ENCODE measurements at regions of chr13 and their contacts with region 1.

Region 1: GRCh38 chr13:73325711-73326558 is 267.1 kb downstream of the KLF5 start:
- DNase-seq: no peak
- ATAC-seq: no peak
- H3K4me3 ChIP-seq: no peak overlapping the region
- H3K4me3 Mint-ChIP-seq: no peak overlapping the region
- H3K27ac ChIP-seq: no peak overlapping the region
- H3K27ac Mint-ChIP-seq: no peak overlapping the region
- H3K4me1 ChIP-seq: no peaks in the 10 kb centered on the region
- H3K4me1 Mint-ChIP-seq: no peaks in the 10 kb centered on the region
- H3K27me3 ChIP-seq: no peaks in the 10 kb centered on the region
- H3K27me3 Mint-ChIP-seq: peaks cover 8% of the 10 kb centered on the region
- CTCF ChIP-seq: no peak

Region 2: DNA sequence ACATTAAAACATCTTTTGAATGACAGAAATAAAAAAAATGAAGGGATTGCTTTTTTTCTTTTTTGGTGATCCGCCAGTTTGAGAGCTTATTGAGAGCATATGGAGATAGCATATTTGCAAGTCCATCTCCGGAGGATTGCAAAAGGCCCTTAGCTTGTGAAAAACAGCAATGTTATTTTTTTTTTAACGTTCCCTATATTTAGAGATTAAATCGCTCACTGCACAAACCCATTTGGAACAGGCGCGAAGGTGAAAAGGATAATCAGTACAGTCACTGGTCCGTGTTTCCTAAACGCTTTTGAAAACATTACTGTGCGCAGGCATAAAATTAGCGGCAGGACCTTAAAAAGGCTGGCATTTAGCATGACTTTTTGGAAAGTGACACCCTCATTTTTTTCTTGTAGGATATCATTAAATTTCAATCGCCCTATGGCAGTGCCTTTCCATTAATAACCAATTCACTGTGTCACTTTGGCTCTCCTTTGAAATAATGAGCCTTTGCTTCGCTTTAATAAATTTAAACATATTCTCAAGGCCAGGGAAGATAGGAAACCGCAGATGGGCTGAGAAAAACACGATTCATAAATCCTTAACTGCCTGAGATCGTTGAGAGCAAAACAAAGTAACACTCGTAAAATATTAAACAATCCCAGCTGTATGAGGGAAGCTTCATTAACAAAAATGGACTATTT is 1801.2 kb before region 1 on chr13:
- CTCF ChIA-PET with region 1: no interaction called
- POLR2A ChIA-PET with region 1: no interaction called
- intact Hi-C with region 1: no loop called
- DNase-seq: no peak
- ATAC-seq: no peak
- H3K4me3 ChIP-seq: no peak overlapping the region
- H3K4me3 Mint-ChIP-seq: no peak overlapping the region
- H3K27ac ChIP-seq: no peak overlapping the region
- H3K27ac Mint-ChIP-seq: no peak overlapping the region
- H3K4me1 ChIP-seq: no peaks in the 10 kb centered on the region
- H3K4me1 Mint-ChIP-seq: no peaks in the 10 kb centered on the region
- H3K27me3 ChIP-seq: no peaks in the 10 kb centered on the region
- H3K27me3 Mint-ChIP-seq: no peaks in the 10 kb centered on the region
- CTCF ChIP-seq: no peak

Region 3: DNA sequence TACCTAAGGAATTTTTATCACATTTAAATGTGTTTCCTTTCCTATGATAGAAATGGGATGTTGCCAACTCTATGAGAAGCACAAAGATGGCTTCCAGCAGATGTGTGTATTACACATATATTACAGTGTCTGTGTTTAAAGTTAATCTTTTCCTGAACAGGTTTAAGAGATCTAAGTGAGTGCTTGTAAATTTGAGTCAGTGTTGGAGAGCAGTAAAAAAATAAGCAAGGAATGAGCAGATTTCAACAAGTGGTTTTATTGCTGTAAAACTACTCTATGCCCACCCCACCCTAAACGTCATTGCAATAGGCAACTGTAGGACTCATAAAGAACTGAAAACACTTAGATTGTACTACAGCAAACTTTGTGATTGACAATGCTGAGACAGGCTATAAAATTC is 18.5 kb before region 1 on chr13:
- CTCF ChIA-PET with region 1: no interaction called
- POLR2A ChIA-PET with region 1: no interaction called
- intact Hi-C with region 1: loop called in 1 of 2 experiments (anchors 2 kb)
- DNase-seq: no peak
- ATAC-seq: no peak
- H3K4me3 ChIP-seq: no peak overlapping the region
- H3K4me3 Mint-ChIP-seq: no peak overlapping the region
- H3K27ac ChIP-seq: no peak overlapping the region
- H3K27ac Mint-ChIP-seq: no peak overlapping the region
- H3K4me1 ChIP-seq: no peaks in the 10 kb centered on the region
- H3K4me1 Mint-ChIP-seq: no peaks in the 10 kb centered on the region
- H3K27me3 ChIP-seq: no peaks in the 10 kb centered on the region
- H3K27me3 Mint-ChIP-seq: peaks cover 3% of the 10 kb centered on the region
- CTCF ChIP-seq: no peak

Region 4: GRCh38 chr13:73428137-73428536 is 102.2 kb after region 1 on chr13:
- CTCF ChIA-PET with region 1: no interaction called
- POLR2A ChIA-PET with region 1: no interaction called
- intact Hi-C with region 1: no loop called
- DNase-seq: no peak
- ATAC-seq: no peak
- H3K4me3 ChIP-seq: no peak overlapping the region
- H3K4me3 Mint-ChIP-seq: no peak overlapping the region
- H3K27ac ChIP-seq: no peak overlapping the region
- H3K27ac Mint-ChIP-seq: no peak overlapping the region
- H3K4me1 ChIP-seq: no peaks in the 10 kb centered on the region
- H3K4me1 Mint-ChIP-seq: no peaks in the 10 kb centered on the region
- H3K27me3 ChIP-seq: no peaks in the 10 kb centered on the region
- H3K27me3 Mint-ChIP-seq: no peaks in the 10 kb centered on the region
- CTCF ChIP-seq: no peak

Measured in CD4-positive, alpha-beta T cell (primary cell).